Naive thymus-derived CD4-positive, alpha-beta T cell (primary cell): ENCODE measurements at regions of chr6 and their contacts with region 1.

Region 1: GRCh38 chr6:28252009-28252975 is at the start of gene ZKSCAN4:
- DNase-seq: peak; percentile 44 to 86 (median 78)
- ATAC-seq: peak; percentile 96
- H3K4me3 ChIP-seq: peak within 1 kb of the TSS; percentile 100
- H3K4me3 Mint-ChIP-seq: peak within 1 kb of the TSS; percentile 84 to 100 (median 98)
- H3K27ac ChIP-seq: peak within 1 kb of the TSS; percentile 55
- H3K27ac Mint-ChIP-seq: peak within 1 kb of the TSS; percentile 85 to 98 (median 92)
- H3K4me1 ChIP-seq: peaks cover 14 to 18% of the 10 kb centered on the region in 2 donors
- H3K4me1 Mint-ChIP-seq: peaks cover 21 to 53% (median 39%) of the 10 kb centered on the region in 7 donors
- H3K27me3 ChIP-seq: no peaks in the 10 kb centered on the region
- H3K27me3 Mint-ChIP-seq: peaks cover 0 to 4% (median 0%) of the 10 kb centered on the region in 5 donors
- total RNA-seq, gene ZKSCAN4: 2.8 to 11.8 (median 8.7) TPM

Region 2: GRCh38 chr6:28124102-28124970 is 128.0 kb before region 1 on chr6 and contains the start of gene ZSCAN16:
- CTCF ChIA-PET with region 1: no interaction called
- POLR2A ChIA-PET with region 1: interaction called, 5 read pairs
- intact Hi-C with region 1: loop called in 1 of 2 experiments (anchors 1 kb)
- DNase-seq: peak; percentile 43 to 72 (median 59)
- ATAC-seq: peak; percentile 86
- H3K4me3 ChIP-seq: peak within 1 kb of the TSS; percentile 86
- H3K4me3 Mint-ChIP-seq: peak within 1 kb of the TSS; percentile 80 to 98 (median 95)
- H3K27ac ChIP-seq: peak within 1 kb of the TSS; percentile 93
- H3K27ac Mint-ChIP-seq: peak within 1 kb of the TSS; percentile 83 to 99 (median 96)
- H3K4me1 ChIP-seq: peaks cover 12 to 16% of the 10 kb centered on the region in 2 donors
- H3K4me1 Mint-ChIP-seq: peaks cover 35 to 54% (median 48%) of the 10 kb centered on the region in 7 donors
- H3K27me3 ChIP-seq: no peaks in the 10 kb centered on the region
- H3K27me3 Mint-ChIP-seq: no peaks in the 10 kb centered on the region
- total RNA-seq, gene ZSCAN16: 6.4 to 13.9 (median 7.6) TPM

Region 3: GRCh38 chr6:28266962-28267694 is 14.8 kb after region 1 on chr6 and contains the start of gene ZSCAN26:
- CTCF ChIA-PET with region 1: interaction called, 7 read pairs
- POLR2A ChIA-PET with region 1: interaction called, 86 read pairs
- intact Hi-C with region 1: loop called (anchors 1 kb)
- DNase-seq: peak; percentile 67 to 91 (median 87)
- ATAC-seq: peak; percentile 96
- H3K4me3 ChIP-seq: peak within 1 kb of the TSS; percentile 96
- H3K4me3 Mint-ChIP-seq: peak within 1 kb of the TSS in 1 of 10 donors; percentile 30
- H3K27ac ChIP-seq: peak within 1 kb of the TSS; percentile 91
- H3K27ac Mint-ChIP-seq: peak within 1 kb of the TSS in 1 of 9 donors; percentile 48
- H3K4me1 ChIP-seq: peaks cover 0 to 24% of the 10 kb centered on the region in 2 donors
- H3K4me1 Mint-ChIP-seq: peaks cover 6 to 37% (median 24%) of the 10 kb centered on the region in 7 donors
- H3K27me3 ChIP-seq: no peaks in the 10 kb centered on the region
- H3K27me3 Mint-ChIP-seq: peaks cover 0 to 7% (median 0%) of the 10 kb centered on the region in 5 donors
- total RNA-seq, gene ZSCAN26: 8.0 to 27.8 (median 12.5) TPM

Region 4: GRCh38 chr6:28335564-28336283 is 83.4 kb after region 1 on chr6 and contains the start of gene ZSCAN31:
- CTCF ChIA-PET with region 1: no interaction called
- POLR2A ChIA-PET with region 1: interaction called, 3 read pairs
- intact Hi-C with region 1: loop called (anchors 1 to 5 kb)
- DNase-seq: peak; percentile 43 to 87 (median 76)
- ATAC-seq: peak; percentile 95
- H3K4me3 ChIP-seq: peak within 1 kb of the TSS; percentile 97
- H3K4me3 Mint-ChIP-seq: peak within 1 kb of the TSS in 1 of 10 donors; percentile 58
- H3K27ac ChIP-seq: peak within 1 kb of the TSS; percentile 92
- H3K27ac Mint-ChIP-seq: peak within 1 kb of the TSS in 1 of 9 donors; percentile 47
- H3K4me1 ChIP-seq: peaks cover 9 to 10% of the 10 kb centered on the region in 2 donors
- H3K4me1 Mint-ChIP-seq: peaks cover 0 to 16% (median 9%) of the 10 kb centered on the region in 7 donors
- H3K27me3 ChIP-seq: no peaks in the 10 kb centered on the region
- H3K27me3 Mint-ChIP-seq: peaks cover 0 to 3% (median 0%) of the 10 kb centered on the region in 5 donors
- total RNA-seq, gene ZSCAN31: 0.93 to 2.4 (median 1.2) TPM

Region 5: DNA sequence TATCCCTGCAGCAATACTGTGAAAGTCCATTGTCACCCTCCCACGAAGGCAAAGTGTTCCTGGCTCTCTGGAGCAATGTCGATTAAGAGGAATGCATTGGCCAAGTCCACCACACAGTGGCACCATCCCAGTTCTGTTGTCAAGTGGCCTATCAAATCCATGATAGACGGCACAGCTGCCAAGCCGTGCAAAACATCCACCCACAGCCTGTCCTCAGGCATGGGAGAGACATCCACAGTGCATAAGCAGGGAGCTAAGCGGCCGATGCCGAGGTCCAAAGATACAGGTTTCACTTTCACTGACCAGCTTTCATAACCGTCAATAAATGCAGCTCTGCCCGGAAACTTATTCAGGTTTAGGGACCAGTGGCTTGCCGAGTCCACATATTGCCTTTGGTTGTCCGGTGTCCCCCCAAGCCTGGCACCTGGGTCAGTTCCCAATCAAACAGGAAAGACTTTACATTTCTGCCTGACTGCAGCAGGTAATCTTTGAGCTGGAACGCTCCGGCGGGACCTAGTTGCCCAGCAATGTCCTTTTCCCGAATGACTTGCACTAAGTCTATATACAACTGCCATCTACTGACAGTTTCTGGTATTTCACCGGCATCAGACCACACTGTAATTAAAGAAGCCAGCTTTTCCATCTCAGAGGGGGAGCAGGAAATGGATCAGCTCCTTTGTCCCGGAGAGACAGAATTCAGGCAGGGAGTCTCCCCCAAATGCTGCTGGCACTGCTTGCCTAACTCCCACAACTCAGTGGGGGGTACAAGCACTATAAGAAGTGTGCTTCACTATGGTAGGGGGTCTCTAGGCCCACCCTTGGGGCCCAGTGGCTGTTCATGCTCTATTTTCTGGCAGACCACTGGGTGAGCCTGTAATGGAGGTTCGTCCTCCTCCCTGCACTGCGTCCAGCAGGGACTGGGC is 103.7 kb after region 1 on chr6:
- CTCF ChIA-PET with region 1: interaction called, 3 read pairs
- POLR2A ChIA-PET with region 1: no interaction called
- intact Hi-C with region 1: loop called in 1 of 2 experiments (anchors 1 kb)
- DNase-seq: peak; percentile 26 to 69 (median 54)
- ATAC-seq: peak; percentile 92
- H3K4me3 ChIP-seq: peak overlapping the region; percentile 69
- H3K4me3 Mint-ChIP-seq: peak overlapping the region; percentile 78 to 96 (median 92)
- H3K27ac ChIP-seq: no peak overlapping the region
- H3K27ac Mint-ChIP-seq: peak overlapping the region; percentile 21 to 89 (median 62)
- H3K4me1 ChIP-seq: peaks cover 0 to 7% of the 10 kb centered on the region in 2 donors
- H3K4me1 Mint-ChIP-seq: peaks cover 16 to 38% (median 34%) of the 10 kb centered on the region in 7 donors
- H3K27me3 ChIP-seq: no peaks in the 10 kb centered on the region
- H3K27me3 Mint-ChIP-seq: no peaks in the 10 kb centered on the region

Region 6: DNA sequence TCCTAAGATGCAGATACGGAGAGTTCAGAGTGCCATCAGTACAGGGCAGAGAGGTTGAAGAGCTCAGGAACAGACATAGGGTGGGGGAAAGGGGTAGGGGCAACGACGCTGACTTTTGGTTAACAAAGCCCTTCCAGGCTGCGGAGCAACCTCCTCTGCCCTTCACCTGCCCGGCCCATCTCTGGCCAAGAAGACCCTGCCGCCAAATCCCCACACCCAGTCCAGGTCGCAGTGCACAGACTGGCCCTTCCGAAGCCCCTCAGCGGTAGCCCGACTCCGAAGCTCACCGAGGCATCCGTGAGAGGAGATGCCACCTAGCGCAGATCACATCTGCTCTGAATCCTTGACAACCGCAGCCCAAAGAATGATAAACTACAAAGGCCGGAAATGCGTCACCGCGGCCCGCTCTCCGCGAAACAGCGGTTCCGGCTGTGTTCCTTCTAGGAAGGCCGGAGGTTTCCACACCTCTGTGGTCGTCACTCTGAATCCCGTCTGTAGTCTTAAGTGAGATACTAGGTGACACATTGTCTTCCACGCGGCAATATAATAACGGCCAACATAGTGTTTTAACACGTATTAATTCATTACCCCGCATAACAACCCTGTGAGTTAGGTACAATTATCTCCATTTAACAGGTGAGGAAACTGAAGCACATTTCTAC is 191.0 kb after region 1 on chr6 and contains the start of gene ZSCAN23:
- CTCF ChIA-PET with region 1: no interaction called
- POLR2A ChIA-PET with region 1: no interaction called
- intact Hi-C with region 1: loop called (anchors 1 to 2 kb)
- DNase-seq: peak; percentile 59 to 93 (median 88)
- ATAC-seq: peak; percentile 96
- H3K4me3 ChIP-seq: peak within 1 kb of the TSS; percentile 76
- H3K4me3 Mint-ChIP-seq: peak within 1 kb of the TSS; percentile 86 to 98 (median 96)
- H3K27ac ChIP-seq: peak within 1 kb of the TSS; percentile 60
- H3K27ac Mint-ChIP-seq: peak within 1 kb of the TSS; percentile 76 to 97 (median 93)
- H3K4me1 ChIP-seq: peaks cover 13 to 16% of the 10 kb centered on the region in 2 donors
- H3K4me1 Mint-ChIP-seq: peaks cover 15 to 38% (median 32%) of the 10 kb centered on the region in 7 donors
- H3K27me3 ChIP-seq: peaks cover 0 to 6% of the 10 kb centered on the region in 2 donors
- H3K27me3 Mint-ChIP-seq: peaks cover 9 to 36% (median 30%) of the 10 kb centered on the region in 5 donors
- total RNA-seq, gene ZSCAN23: 1.4 to 3.4 (median 2.4) TPM

Region 7: DNA sequence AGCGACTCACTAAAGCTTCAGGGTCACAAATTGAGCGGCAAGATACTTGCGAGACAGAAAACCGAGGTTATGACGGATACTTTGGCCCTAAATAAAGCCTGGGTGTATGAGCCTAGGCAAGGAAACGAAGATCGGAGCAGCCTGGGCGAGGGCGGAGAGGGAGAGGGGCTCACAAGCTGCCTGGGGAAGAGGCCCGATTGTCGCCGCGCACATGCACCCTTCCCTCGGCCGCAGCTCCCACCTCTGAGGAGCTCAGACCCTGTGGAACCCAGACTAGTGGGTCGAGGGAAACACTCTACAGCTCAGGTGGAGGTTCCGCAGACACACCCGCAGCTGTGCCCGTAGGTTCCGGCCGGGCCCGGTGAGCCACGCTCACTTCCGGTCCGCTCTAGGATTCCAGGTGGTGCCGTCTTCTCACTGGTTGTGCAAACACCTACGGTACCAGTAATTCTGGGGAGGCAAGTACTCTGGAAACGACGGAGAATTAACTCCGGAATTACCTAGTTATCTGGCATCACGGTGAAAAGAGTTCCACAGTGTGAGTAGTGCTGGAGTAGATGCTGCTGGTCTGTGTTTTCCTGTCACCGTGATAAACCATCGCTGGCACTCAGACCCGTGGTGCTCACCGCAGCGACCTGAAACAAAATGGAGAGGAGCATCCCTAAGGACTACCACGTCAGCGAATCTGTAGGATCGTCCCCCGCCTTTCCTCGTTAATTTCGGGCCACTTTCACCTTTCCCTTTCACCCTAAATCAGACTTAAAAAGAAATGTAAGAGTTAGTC is 334.9 kb after region 1 on chr6:
- CTCF ChIA-PET with region 1: no interaction called
- POLR2A ChIA-PET with region 1: no interaction called
- intact Hi-C with region 1: loop called in 1 of 2 experiments (anchors 2 kb)
- DNase-seq: peak; percentile 29 to 70 (median 60)
- ATAC-seq: peak; percentile 77
- H3K4me3 ChIP-seq: peak overlapping the region; percentile 54
- H3K4me3 Mint-ChIP-seq: peak overlapping the region; percentile 82 to 90 (median 88)
- H3K27ac ChIP-seq: no peak overlapping the region
- H3K27ac Mint-ChIP-seq: peak overlapping the region in 8 of 9 donors; percentile 5 to 88 (median 60)
- H3K4me1 ChIP-seq: peaks cover 0 to 9% of the 10 kb centered on the region in 2 donors
- H3K4me1 Mint-ChIP-seq: peaks cover 11 to 43% (median 34%) of the 10 kb centered on the region in 7 donors
- H3K27me3 ChIP-seq: peaks cover 10 to 28% of the 10 kb centered on the region in 2 donors
- H3K27me3 Mint-ChIP-seq: peaks cover 57 to 85% (median 76%) of the 10 kb centered on the region in 5 donors